ENCODE measurements at regions of chr14 and their contacts with region 1.

Region 1: DNA sequence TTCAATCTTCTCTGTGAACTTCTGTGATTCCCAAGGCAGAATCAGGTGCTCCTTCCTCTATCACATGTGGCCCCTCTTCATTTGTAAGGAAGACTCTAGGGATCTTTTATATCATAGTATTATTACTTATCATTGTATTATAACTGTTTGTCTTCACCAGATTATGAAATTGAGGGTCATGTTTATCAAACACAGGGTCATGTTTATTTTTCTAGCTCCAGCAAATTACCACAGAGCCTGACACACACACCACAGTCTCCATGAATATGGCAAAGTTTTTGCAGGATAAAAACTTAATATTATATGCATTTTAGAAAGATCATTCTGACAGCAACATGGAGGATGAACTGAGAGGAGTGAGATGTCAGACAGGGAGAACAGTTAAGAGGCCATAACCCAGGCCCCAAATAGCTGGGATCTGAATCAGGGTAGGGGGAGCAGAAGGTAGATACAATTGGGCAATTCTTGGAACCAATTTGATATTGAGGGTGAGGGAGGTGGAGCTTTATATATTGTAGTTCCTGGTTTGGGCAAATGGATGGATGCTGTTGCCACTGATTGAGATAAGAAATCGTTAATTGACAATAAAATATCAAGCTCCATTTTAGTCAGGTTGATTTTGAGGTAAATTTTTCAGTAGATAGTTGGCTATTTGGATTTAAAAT is 130.7 kb downstream of the DHRS2 start:
- DNase-seq: no peak
- ATAC-seq: no peak
- H3K4me3 ChIP-seq: no peak overlapping the region
- H3K4me3 Mint-ChIP-seq: no peak overlapping the region
- H3K27ac ChIP-seq: no peak overlapping the region
- H3K27ac Mint-ChIP-seq: no peak overlapping the region
- H3K4me1 ChIP-seq: no peaks in the 10 kb centered on the region
- H3K4me1 Mint-ChIP-seq: no peaks in the 10 kb centered on the region
- H3K27me3 ChIP-seq: peaks cover 0 to 6% of the 10 kb centered on the region in 2 experiments
- H3K27me3 Mint-ChIP-seq: peaks cover 19% of the 10 kb centered on the region
- CTCF ChIP-seq: no peak

Region 2: GRCh38 chr14:23727566-23728335 is 39.1 kb before region 1 on chr14:
- CTCF ChIA-PET with region 1: no interaction called
- POLR2A ChIA-PET with region 1: no interaction called
- intact Hi-C with region 1: loop called in 1 of 2 experiments (anchors 1 kb)
- DNase-seq: peak in 2 of 9 experiments; percentile 8 to 17
- ATAC-seq: no peak
- H3K4me3 ChIP-seq: no peak overlapping the region
- H3K4me3 Mint-ChIP-seq: no peak overlapping the region
- H3K27ac ChIP-seq: no peak overlapping the region
- H3K27ac Mint-ChIP-seq: no peak overlapping the region
- H3K4me1 ChIP-seq: no peaks in the 10 kb centered on the region
- H3K4me1 Mint-ChIP-seq: no peaks in the 10 kb centered on the region
- H3K27me3 ChIP-seq: no peaks in the 10 kb centered on the region
- H3K27me3 Mint-ChIP-seq: peaks cover 5% of the 10 kb centered on the region
- CTCF ChIP-seq: no peak